CD8-positive, alpha-beta T cell (primary cell): ENCODE measurements at regions of chr1 and their contacts with region 1.

Region 1: GRCh38 chr1:37449936-37450335 is 24.4 kb upstream of the ZC3H12A start:
- DNase-seq: peak in 4 of 9 experiments; percentile 18 to 59 (median 40)
- ATAC-seq: peak; percentile 74
- H3K4me3 ChIP-seq: no peak overlapping the region
- H3K4me3 Mint-ChIP-seq: no peak overlapping the region
- H3K27ac ChIP-seq: no peak overlapping the region
- H3K27ac Mint-ChIP-seq: no peak overlapping the region
- H3K4me1 ChIP-seq: peaks cover 10% of the 10 kb centered on the region
- H3K4me1 Mint-ChIP-seq: peaks cover 18% of the 10 kb centered on the region
- H3K27me3 ChIP-seq: no peaks in the 10 kb centered on the region
- H3K27me3 Mint-ChIP-seq: peaks cover 10% of the 10 kb centered on the region
- CTCF ChIP-seq: no peak

Region 2: DNA sequence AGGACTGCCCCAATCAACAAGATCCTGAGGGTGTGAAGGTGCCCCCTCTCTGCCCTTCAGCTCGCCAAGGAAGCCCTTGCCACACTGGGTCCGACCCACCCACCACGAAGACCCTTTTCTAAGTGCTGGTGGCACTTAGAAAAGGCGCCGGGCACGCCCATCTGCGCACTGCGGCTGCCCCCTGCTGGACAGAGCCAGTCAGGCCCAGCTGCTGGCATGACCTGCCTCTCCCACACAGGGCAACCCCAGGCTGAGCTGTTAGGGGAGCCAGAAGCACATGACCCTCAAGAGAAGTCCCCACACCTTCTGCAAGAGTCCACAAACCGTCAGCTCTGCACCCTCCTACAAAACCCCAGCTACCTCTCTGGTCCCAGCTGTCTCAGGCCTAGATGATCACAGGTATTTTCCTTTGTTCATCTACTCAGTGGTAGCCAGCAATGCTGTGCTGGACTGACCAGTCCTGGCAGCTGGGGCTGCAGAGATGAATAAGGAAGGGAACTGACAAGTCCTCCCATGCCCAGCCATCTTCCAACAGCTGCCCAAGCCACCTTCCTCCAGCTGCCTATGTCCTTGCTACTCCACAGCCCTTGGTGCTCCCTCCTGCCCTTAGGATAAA is 15.5 kb before region 1 on chr1:
- CTCF ChIA-PET with region 1: interaction called, 10 read pairs
- POLR2A ChIA-PET with region 1: no interaction called
- intact Hi-C with region 1: loop called in 1 of 2 experiments (anchors 1 kb)
- DNase-seq: peak; percentile 47 to 76 (median 67)
- ATAC-seq: peak; percentile 85
- H3K4me3 ChIP-seq: no peak overlapping the region
- H3K4me3 Mint-ChIP-seq: no peak overlapping the region
- H3K27ac ChIP-seq: no peak overlapping the region
- H3K27ac Mint-ChIP-seq: no peak overlapping the region
- H3K4me1 ChIP-seq: no peaks in the 10 kb centered on the region
- H3K4me1 Mint-ChIP-seq: no peaks in the 10 kb centered on the region
- H3K27me3 ChIP-seq: no peaks in the 10 kb centered on the region
- H3K27me3 Mint-ChIP-seq: peaks cover 35% of the 10 kb centered on the region
- CTCF ChIP-seq: peak; percentile 65

Region 3: DNA sequence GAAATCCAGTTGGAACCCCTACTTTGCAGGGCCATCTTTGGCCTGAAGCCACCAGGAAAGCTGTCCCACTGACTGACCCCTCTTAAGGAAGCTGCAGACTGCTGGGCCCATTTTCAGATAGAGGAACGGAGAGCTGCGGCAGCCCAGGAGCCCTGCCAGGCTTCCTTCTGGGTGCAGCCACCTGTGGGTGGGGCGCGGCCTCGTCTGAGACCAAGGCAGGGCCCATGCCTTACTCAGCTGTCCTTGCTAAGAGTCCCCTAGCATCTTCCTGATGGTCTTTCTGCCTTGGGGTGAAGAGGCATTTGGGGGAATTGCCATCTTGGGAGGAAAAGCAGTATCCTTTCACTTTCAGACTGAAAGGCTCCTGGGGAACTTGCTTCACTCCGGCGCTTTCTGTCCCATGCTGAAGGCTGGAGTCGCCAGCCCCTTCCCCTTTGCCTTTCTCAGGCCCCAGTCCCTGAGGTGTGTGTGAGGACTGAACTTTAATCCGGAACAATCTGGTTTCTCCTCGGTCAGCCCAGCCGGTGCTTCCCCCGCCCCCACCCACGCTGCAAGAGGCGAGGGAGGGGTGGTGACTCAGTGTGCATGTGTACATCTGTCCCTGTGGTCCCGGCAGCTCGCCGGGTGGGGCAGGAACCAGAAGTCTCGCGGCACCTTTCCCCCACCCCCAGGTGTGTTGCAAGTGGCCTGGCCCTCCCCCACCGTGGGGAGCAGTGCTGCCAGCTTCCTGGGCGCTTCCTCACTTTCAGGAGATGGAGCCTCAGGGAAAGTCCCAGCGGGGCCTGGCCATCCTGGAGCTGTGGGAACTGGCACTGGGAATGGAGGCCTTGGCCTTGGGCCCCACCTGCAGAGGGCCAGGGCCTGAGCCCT is 29.6 kb after region 1 on chr1:
- CTCF ChIA-PET with region 1: interaction called, 559 read pairs
- POLR2A ChIA-PET with region 1: interaction called, 9 read pairs
- intact Hi-C with region 1: no loop called
- DNase-seq: peak; percentile 62 to 95 (median 91)
- ATAC-seq: peak; percentile 55
- H3K4me3 ChIP-seq: peak overlapping the region; percentile 93 to 95
- H3K4me3 Mint-ChIP-seq: peak overlapping the region; percentile 95
- H3K27ac ChIP-seq: peak overlapping the region; percentile 95 to 99
- H3K27ac Mint-ChIP-seq: peak overlapping the region; percentile 99
- H3K4me1 ChIP-seq: peaks cover 39% of the 10 kb centered on the region
- H3K4me1 Mint-ChIP-seq: peaks cover 42% of the 10 kb centered on the region
- H3K27me3 ChIP-seq: no peaks in the 10 kb centered on the region
- H3K27me3 Mint-ChIP-seq: no peaks in the 10 kb centered on the region
- CTCF ChIP-seq: no peak

Region 4: DNA sequence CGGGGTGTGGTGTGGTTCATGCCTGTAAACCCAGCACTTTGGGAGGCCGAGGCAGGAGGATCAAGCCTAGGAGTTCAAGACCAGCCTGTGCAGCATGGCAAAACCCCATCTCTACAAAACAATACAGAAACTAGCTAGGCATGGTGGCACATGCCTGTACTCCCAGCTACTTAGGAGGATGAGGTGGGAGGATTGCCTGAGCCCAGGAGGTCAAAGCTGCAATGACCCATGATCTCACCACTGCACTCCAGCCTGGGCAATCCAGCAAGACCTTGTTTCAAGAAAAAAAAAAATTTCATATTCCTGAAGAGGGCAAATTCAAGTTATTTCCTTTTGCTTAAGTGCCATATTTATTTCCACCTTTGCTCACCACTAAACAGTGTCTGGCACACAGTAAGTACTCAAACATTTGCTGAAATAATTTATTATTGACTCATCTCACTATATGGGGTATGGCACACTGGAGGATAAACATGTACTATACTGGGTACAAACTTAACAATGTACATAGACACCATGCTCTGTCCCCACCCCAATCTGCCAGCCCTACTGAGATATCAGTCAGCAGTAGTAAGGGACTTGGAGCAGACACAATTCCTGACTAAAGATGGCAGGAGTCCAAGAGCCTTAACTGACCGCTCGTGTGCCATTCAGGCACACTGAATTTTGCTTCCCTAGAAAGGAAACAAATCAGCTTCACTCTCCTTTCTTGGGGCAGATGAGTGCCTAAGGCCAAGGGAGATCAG is 49.1 kb after region 1 on chr1:
- CTCF ChIA-PET with region 1: interaction called, 49 read pairs
- POLR2A ChIA-PET with region 1: no interaction called
- intact Hi-C with region 1: no loop called
- DNase-seq: no peak
- ATAC-seq: no peak
- H3K4me3 ChIP-seq: no peak overlapping the region
- H3K4me3 Mint-ChIP-seq: no peak overlapping the region
- H3K27ac ChIP-seq: no peak overlapping the region
- H3K27ac Mint-ChIP-seq: no peak overlapping the region
- H3K4me1 ChIP-seq: no peaks in the 10 kb centered on the region
- H3K4me1 Mint-ChIP-seq: peaks cover 13% of the 10 kb centered on the region
- H3K27me3 ChIP-seq: no peaks in the 10 kb centered on the region
- H3K27me3 Mint-ChIP-seq: no peaks in the 10 kb centered on the region
- CTCF ChIP-seq: no peak

Region 5: GRCh38 chr1:37553927-37554808 is 104.2 kb after region 1 on chr1 and contains the start of gene SNIP1:
- CTCF ChIA-PET with region 1: no interaction called
- POLR2A ChIA-PET with region 1: no interaction called
- intact Hi-C with region 1: loop called in 1 of 2 experiments (anchors 2 kb)
- DNase-seq: peak; percentile 84 to 96 (median 91)
- ATAC-seq: peak; percentile 95
- H3K4me3 ChIP-seq: peak within 1 kb of the TSS; percentile 88 to 97
- H3K4me3 Mint-ChIP-seq: peak within 1 kb of the TSS; percentile 100
- H3K27ac ChIP-seq: peak within 1 kb of the TSS; percentile 88 to 91
- H3K27ac Mint-ChIP-seq: peak within 1 kb of the TSS; percentile 100
- H3K4me1 ChIP-seq: peaks cover 24% of the 10 kb centered on the region
- H3K4me1 Mint-ChIP-seq: peaks cover 43% of the 10 kb centered on the region
- H3K27me3 ChIP-seq: no peaks in the 10 kb centered on the region
- H3K27me3 Mint-ChIP-seq: peaks cover 2% of the 10 kb centered on the region
- CTCF ChIP-seq: no peak
- total RNA-seq, gene SNIP1: 71.7 to 84.2 TPM

Region 6: DNA sequence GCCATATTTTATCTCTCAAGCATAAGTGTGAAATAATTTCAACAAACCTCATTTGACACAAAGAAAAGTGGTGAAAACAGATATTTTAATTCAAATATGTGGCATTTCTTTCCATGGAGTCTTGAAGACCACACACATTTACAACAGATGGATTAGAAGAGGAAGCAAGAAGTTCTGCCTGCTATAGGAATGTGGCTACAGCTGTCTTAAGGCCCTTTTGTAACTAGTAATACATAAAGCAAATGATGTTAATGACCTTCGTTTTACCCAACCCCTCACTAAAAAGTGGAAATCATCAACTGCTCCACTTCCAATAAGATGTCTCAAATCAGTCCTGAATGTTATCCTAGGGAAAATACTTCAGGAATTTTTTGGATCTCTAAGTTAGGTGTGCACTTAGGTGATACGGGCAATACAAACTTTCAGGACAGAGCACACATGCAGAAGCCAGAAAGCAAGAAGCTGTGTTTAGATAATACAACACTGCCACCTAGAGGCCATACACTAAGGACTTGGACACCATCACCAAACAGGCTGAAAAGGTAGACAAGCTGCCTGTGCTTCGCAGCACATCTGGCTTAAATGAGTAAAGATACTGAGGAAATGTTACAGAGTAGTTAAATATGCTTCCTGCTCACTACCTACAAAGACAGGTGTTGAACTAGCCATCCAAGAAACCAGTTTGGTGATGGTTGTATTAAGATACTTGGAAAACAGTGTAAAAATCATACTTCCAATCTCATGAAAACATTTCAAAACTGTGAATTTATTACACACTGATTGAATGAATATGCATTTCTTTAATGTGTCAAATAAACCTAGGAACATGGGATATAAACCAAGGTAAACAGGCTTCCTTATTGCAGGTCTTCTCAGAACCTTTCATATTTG is 1385.2 kb after region 1 on chr1:
- CTCF ChIA-PET with region 1: no interaction called
- POLR2A ChIA-PET with region 1: no interaction called
- intact Hi-C with region 1: loop called in 1 of 2 experiments (anchors 10 kb)
- DNase-seq: peak in 7 of 9 experiments; percentile 7 to 85 (median 33)
- ATAC-seq: peak; percentile 75
- H3K4me3 ChIP-seq: no peak overlapping the region
- H3K4me3 Mint-ChIP-seq: no peak overlapping the region
- H3K27ac ChIP-seq: no peak overlapping the region
- H3K27ac Mint-ChIP-seq: no peak overlapping the region
- H3K4me1 ChIP-seq: no peaks in the 10 kb centered on the region
- H3K4me1 Mint-ChIP-seq: peaks cover under 1% of the 10 kb centered on the region
- H3K27me3 ChIP-seq: peaks cover 0 to 5% of the 10 kb centered on the region in 2 experiments
- H3K27me3 Mint-ChIP-seq: peaks cover 5% of the 10 kb centered on the region
- CTCF ChIP-seq: peak; percentile 73